Activated CD4-positive, alpha-beta T cell treated with anti-CD3 and anti-CD28 coated beads for 36 hours (primary cell): ENCODE measurements at regions of chr5 and their contacts with region 1.

Region 1: GRCh38 chr5:142713121-142713706 is 27.3 kb upstream of the FGF1 start:
- DNase-seq: peak; percentile 92
- ATAC-seq: peak; percentile 95
- H3K4me3 Mint-ChIP-seq: peak overlapping the region; percentile 64
- H3K27ac Mint-ChIP-seq: no peak overlapping the region
- H3K4me1 Mint-ChIP-seq: peaks cover 3% of the 10 kb centered on the region
- H3K27me3 Mint-ChIP-seq: no peaks in the 10 kb centered on the region

Region 2: DNA sequence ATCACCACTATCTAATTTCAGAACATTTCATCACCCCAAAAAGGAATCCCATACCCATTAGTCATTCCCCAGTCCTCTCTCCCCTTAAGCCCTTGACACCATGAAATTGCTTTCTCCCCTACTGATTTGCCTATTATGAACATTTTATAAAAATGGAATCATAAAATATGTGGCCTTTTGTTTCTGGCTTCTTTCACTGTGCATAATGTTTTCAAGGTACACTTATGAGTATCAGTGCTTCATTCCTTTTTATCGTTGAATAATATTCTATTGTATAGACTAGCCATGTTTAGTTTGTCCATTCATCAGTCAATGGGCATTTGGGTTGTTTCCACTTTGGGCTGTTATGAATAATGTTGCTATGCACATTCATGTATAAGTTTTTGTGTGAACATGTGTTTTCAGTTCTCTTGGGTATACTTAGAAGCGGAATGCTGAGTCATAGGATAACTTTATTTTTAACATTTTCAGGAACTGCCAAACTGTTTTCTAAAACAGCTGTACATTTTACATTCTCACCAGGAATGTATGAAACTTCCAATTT is 13.0 kb after region 1 on chr5:
- CTCF ChIA-PET with region 1: interaction called, 46 read pairs
- POLR2A ChIA-PET with region 1: no interaction called
- intact Hi-C with region 1: no loop called
- DNase-seq: no peak
- ATAC-seq: peak; percentile 65
- H3K4me3 Mint-ChIP-seq: no peak overlapping the region
- H3K27ac Mint-ChIP-seq: no peak overlapping the region
- H3K4me1 Mint-ChIP-seq: peaks cover 10% of the 10 kb centered on the region
- H3K27me3 Mint-ChIP-seq: no peaks in the 10 kb centered on the region

Region 3: DNA sequence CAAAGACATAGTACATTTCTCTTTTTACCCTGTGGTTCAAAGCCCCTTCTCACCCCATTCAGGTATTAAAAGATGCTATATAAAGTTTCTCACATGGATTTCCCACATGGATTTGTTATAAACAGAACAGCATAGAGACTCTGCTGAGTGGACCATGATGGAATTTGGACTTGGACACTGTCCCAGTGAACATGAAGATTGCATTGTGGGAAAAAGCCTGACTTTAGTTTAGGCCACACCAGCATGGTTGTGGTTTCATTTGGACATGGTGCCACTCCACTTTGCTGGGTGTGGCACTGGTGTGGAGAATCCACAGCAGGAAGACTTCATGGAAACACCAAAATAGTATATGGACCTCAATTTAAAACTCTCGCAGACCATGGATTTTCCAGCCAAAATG is 181.5 kb after region 1 on chr5:
- CTCF ChIA-PET with region 1: interaction called, 371 read pairs
- POLR2A ChIA-PET with region 1: no interaction called
- intact Hi-C with region 1: no loop called
- DNase-seq: no peak
- ATAC-seq: no peak
- H3K4me3 Mint-ChIP-seq: no peak overlapping the region
- H3K27ac Mint-ChIP-seq: no peak overlapping the region
- H3K4me1 Mint-ChIP-seq: no peaks in the 10 kb centered on the region
- H3K27me3 Mint-ChIP-seq: no peaks in the 10 kb centered on the region